Dorsolateral prefrontal cortex (tissue), 120 donors: ENCODE measurements at regions of chr12 and their contacts with region 1.

Region 1: GRCh38 chr12:120649442-120650232 is 9.2 kb downstream of the CABP1 start:
- DNase-seq: peak in 3 of 10 donors; percentile 28 to 58 (median 52)
- H3K4me3 ChIP-seq: peak overlapping the region; percentile 13 to 63 (median 46)
- H3K27ac ChIP-seq: peak overlapping the region in 55 of 59 donors; percentile 19 to 88 (median 76)
- H3K27me3 ChIP-seq: peaks cover 0 to 6% (median 0%) of the 10 kb centered on the region in 45 donors
- CTCF ChIP-seq: peak in 18 of 56 donors; percentile 0 to 43 (median 17)

Region 2: GRCh38 chr12:120257041-120257821 is 392.4 kb before region 1 on chr12:
- intact Hi-C with region 1: no loop called
- DNase-seq: peak in 6 of 10 donors; percentile 29 to 86 (median 49)
- H3K4me3 ChIP-seq: peak overlapping the region in 20 of 59 donors; percentile 1 to 43 (median 14)
- H3K27ac ChIP-seq: peak overlapping the region; percentile 9 to 93 (median 83)
- H3K27me3 ChIP-seq: no peaks in the 10 kb centered on the region
- CTCF ChIP-seq: peak in 6 of 56 donors; percentile 4 to 22 (median 18)

Region 3: DNA sequence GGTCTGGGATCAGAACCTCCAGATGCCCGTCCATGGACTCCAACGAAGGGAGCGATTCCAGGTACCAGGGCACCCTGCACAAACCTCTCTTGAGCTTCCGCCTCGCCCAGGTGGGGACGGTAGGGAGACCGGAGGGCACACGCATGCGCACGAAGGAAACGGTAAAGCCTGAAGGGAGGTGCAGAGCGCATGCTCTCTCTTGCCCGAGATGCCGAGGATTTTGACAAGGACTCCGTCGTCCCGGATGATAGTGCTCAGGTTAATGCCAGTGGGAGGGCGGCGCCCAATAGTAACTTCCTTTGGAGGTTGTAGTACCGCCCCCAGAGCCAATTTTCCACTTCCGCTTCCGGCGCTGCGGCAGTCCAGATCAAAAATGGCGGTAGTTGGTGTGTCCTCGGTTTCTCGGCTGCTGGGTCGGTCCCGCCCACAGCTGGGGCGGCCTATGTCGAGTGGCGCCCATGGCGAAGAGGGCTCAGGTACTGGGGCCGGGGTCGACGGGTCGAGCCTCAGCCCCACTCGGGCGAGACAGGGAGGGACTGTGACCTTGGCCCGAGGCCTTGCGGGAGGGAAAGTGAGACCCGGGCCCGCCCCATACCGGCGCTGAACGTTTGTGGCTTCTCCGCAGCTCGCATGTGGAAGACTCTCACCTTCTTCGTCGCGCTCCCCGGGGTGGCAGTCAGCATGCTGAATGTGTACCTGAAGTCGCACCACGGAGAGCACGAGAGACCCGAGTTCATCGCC is 211.7 kb before region 1 on chr12 and contains the start of gene COX6A1:
- intact Hi-C with region 1: loop called in 1 of 2 experiments (anchors 5 kb)
- DNase-seq: peak; percentile 87 to 97 (median 96)
- H3K4me3 ChIP-seq: peak within 1 kb of the TSS; percentile 64 to 98 (median 88)
- H3K27ac ChIP-seq: peak within 1 kb of the TSS; percentile 40 to 93 (median 85)
- H3K27me3 ChIP-seq: no peaks in the 10 kb centered on the region
- CTCF ChIP-seq: peak in 42 of 56 donors; percentile 10 to 67 (median 41)
- total RNA-seq, gene COX6A1: 341 to 794 (median 594) TPM

Region 4: GRCh38 chr12:120614873-120615272 is 34.8 kb before region 1 on chr12:
- intact Hi-C with region 1: no loop called
- DNase-seq: no peak
- H3K4me3 ChIP-seq: no peak overlapping the region
- H3K27ac ChIP-seq: no peak overlapping the region
- H3K27me3 ChIP-seq: no peaks in the 10 kb centered on the region
- CTCF ChIP-seq: no peak

Region 5: DNA sequence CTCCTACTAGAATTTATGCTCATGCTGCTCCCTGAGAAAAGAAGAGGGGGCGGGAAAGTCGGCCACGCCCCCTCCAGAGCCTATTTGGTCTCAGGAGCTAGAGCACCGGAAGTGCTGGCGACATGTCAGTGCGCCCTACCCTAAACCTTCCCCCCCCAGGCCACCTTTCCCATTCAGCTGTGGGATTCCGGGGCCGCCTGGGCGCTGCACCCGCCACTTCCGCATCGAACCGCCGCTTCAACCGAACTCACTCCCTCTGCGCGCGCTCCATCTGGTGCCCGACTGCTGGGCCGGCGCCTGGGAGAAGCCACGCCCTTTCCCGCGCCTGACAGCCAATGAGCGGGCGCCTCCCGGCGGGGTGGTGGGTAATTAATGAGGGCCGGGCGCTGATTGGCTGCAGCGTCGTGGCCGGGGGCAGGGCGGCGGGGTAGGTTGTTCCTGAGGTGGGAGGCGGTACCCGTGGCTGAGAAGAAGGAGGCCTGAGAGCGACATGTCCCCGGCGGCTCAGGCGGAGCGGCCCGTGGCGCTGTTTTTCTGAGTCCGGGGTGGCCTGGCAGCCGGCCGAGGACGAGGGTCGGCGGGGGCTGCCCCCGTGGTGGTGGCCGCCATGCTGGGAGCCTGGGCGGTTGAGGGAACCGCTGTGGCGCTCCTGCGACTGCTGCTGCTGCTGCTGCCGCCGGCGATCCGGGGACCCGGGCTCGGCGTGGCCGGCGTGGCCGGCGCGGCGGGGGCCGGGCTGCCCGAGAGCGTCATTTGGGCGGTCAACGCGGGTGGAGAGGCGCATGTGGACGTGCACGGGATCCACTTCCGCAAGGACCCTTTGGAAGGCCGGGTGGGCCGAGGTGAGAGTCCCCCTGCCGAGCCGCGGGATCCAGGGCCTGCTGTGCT is 37.3 kb after region 1 on chr12 and contains the start of gene MLEC:
- intact Hi-C with region 1: loop called (anchors 2 kb)
- DNase-seq: peak; percentile 96 to 99 (median 98)
- H3K4me3 ChIP-seq: peak within 1 kb of the TSS; percentile 70 to 100 (median 94)
- H3K27ac ChIP-seq: peak within 1 kb of the TSS; percentile 81 to 99 (median 96)
- H3K27me3 ChIP-seq: no peaks in the 10 kb centered on the region
- CTCF ChIP-seq: peak in 31 of 56 donors; percentile 8 to 58 (median 31)
- total RNA-seq, gene MLEC: 50.4 to 97.1 (median 73.3) TPM

Region 6: DNA sequence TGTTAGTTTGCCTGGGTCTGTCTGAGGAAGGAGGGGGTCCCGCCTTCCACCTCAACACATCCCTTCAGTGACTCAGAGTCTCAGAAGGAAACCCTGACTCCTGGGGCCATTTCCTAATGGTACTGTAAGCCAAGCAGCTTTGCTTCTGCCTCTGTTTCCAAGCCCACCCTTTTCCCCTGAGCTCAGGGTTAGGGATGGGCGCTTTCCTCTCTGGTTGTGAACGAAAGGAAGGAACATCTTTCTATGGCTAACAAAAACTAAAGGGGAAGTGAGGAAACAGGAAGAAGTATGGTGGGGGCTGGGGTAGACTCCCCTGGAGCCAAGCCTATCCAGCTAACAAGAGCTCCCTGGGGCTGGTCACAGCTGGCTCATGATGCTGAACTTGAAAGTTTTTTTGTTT is 49.0 kb after region 1 on chr12:
- intact Hi-C with region 1: no loop called
- DNase-seq: no peak
- H3K4me3 ChIP-seq: no peak overlapping the region
- H3K27ac ChIP-seq: peak overlapping the region in 4 of 59 donors; percentile 3 to 22 (median 14)
- H3K27me3 ChIP-seq: no peaks in the 10 kb centered on the region
- CTCF ChIP-seq: no peak

Region 7: GRCh38 chr12:120710031-120710804 is 60.6 kb after region 1 on chr12 and contains the start of gene UNC119B:
- intact Hi-C with region 1: loop called (anchors 2 to 5 kb)
- DNase-seq: peak in 9 of 10 donors; percentile 40 to 82 (median 76)
- H3K4me3 ChIP-seq: peak within 1 kb of the TSS; percentile 69 to 97 (median 86)
- H3K27ac ChIP-seq: peak within 1 kb of the TSS; percentile 64 to 96 (median 91)
- H3K27me3 ChIP-seq: no peaks in the 10 kb centered on the region
- CTCF ChIP-seq: peak in 18 of 56 donors; percentile 6 to 44 (median 19)
- total RNA-seq, gene UNC119B: 19.6 to 43.0 (median 27.2) TPM

Region 8: DNA sequence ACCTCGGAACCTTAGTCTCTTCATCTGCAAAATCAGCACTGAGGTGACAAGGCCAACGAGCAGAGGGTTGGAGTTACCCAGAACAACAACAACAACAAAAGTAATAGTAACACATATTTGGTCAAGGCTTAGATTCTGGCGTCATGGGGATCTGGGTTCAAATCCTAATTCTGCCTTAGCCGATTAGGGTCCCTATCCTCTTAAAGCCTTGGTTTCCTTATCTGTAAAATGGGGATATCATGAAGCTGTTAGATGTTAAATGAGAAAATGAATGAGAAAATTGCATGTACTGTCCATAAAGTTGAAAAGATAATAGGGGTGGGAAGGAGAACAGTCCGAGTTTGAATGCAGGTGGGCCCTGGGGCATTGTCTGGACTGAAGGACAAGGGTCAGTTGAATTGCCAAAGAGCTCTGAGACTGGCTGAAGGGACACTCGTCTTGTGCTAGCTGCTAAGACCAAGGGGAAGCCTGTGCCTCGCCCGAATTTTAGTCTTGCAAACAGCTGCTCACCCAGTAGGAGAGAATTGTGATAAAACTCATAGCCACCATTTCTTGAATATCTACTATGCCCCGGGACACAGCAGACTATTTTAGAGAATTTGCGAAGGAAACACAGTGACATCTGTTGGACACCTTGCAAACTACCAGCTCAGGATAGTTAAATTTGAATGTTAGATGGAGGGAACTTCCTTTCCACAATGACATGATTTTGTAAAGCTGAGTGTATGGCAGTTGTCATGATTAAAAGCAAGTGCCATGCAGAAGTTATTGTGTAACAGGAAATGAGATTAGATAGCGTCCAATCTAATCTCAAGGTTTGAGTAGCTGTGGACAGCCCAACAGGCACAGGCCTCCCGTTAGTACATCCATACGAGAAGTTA is 321.9 kb after region 1 on chr12:
- intact Hi-C with region 1: loop called (anchors 2 kb)
- DNase-seq: peak in 2 of 10 donors; percentile 11 to 47
- H3K4me3 ChIP-seq: no peak overlapping the region
- H3K27ac ChIP-seq: no peak overlapping the region
- H3K27me3 ChIP-seq: no peaks in the 10 kb centered on the region
- CTCF ChIP-seq: peak; percentile 53 to 87 (median 78)

Region 9: GRCh38 chr12:121005346-121005815 is 355.7 kb after region 1 on chr12:
- intact Hi-C with region 1: loop called in 1 of 2 experiments (anchors 5 kb)
- DNase-seq: peak in 3 of 10 donors; percentile 17 to 54 (median 40)
- H3K4me3 ChIP-seq: no peak overlapping the region
- H3K27ac ChIP-seq: peak overlapping the region in 2 of 59 donors; percentile 18 to 20
- H3K27me3 ChIP-seq: no peaks in the 10 kb centered on the region
- CTCF ChIP-seq: peak in 52 of 56 donors; percentile 13 to 54 (median 34)